ENCODE measurements at regions of chr16 and their contacts with region 1.

Region 1: DNA sequence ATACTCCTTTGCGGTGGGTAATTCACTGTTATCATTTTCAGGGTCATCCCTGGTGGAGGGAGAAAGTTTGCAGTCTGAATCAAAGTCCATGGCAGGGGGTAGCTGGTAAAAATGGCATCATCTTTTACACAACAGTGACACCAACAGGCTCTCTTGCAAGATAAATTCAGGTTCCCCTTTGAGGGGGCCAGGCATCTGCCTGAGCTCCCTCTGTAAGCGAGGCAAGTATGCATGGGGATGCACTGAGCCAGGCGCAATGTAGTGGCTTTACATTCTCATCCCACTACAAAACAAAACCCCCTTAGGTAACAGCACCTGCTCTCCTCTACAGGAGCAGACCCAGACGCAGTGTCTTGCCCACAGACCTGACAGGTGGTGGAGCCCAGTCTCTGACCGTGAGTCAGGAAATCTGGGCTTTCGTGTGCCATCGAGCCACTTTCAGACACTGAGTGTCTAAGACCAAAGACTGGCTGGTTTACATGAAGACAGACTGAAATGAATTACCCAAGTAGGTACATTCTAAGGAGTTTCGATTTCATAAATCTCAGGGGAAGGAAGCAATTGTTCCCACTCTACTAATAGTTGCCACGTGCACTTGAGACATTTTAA is 17.7 kb downstream of the LITAFD start:
- DNase-seq: no peak
- H3K4me3 Mint-ChIP-seq: no peak overlapping the region
- H3K27ac Mint-ChIP-seq: no peak overlapping the region
- H3K4me1 Mint-ChIP-seq: no peaks in the 10 kb centered on the region
- H3K27me3 Mint-ChIP-seq: no peaks in the 10 kb centered on the region

Region 2: DNA sequence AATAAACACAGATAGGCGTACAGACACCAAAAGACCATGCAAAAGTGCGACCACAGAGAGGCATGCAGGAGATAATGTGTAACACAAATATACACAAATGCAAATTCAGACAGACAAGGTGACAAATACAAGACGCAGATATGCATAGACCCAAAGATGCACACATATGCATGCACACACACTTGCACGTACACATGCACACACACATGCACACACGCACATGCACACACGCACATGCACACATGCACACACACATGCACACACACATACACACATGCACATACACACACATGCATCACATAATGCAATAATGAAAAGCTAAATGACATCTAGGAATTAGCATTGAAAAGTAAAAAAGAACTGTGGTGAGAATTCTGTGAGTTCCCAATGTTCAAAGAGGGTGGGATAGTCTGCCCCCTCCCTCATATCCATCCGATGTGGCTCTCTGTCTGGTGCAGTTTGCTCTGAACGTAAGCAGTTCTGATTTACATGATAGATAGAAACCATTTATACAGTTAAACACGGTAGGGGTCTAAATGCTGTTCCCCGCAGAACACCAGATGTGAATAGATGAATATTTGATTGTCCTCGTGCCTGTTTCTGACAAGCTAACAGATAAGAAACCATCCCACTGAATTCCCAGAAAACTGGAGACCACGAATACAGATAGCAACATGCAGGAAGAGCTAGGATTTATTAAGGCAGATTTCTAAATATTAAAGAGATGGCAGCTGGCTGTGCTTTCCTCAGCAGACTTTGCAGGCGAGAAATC is 495.6 kb before region 1 on chr16:
- intact Hi-C with region 1: no loop called
- DNase-seq: no peak
- H3K4me3 Mint-ChIP-seq: no peak overlapping the region
- H3K27ac Mint-ChIP-seq: no peak overlapping the region
- H3K4me1 Mint-ChIP-seq: no peaks in the 10 kb centered on the region
- H3K27me3 Mint-ChIP-seq: no peaks in the 10 kb centered on the region

Region 3: DNA sequence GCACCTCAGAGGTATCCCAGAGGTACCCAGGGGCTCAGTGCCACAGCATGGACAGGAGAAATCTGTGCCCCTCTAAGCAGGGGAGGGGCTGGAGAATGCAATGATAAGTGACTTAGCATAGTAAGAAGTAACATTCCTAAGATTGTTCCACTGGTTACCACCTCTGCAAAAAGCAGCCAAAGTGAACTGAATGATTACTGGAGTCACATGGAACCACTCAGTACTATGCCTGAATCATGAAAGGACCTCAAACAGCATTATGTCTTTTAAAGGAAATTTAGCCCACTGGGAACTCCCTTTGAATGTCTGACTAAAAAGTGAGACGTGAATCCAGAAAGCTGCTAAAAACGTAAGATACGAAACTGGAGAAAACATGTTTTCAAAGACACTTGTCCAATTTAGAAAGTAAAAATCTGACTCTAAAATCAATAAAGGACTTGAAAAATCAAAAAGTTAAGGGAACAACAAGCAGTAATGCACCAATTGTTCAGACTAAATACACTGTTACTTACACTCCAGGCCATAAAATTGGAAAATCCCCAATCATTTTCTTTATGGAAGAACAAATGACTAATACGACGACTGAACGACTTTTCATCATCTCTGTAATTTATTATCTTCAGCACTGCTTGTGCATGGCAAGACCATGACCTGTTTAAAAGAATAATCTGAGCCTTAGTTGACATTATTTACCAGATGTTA is 21.0 kb after region 1 on chr16:
- intact Hi-C with region 1: loop called (anchors 2 kb)
- DNase-seq: no peak
- H3K4me3 Mint-ChIP-seq: peak overlapping the region; percentile 7
- H3K27ac Mint-ChIP-seq: peak overlapping the region; percentile 73
- H3K4me1 Mint-ChIP-seq: peaks cover 60% of the 10 kb centered on the region
- H3K27me3 Mint-ChIP-seq: no peaks in the 10 kb centered on the region

Measured in activated T-helper 1 cell treated with anti-CD3 and anti-CD28 coated beads, Interleukin-12 subunit alpha, Interleukin-12 subunit beta, Interleukin-2, Interleukin-4 antibody, amounts not matched to agents 30 ng/mL and 10 ng/mL and 1 ng/mL, durations not matched to agents 14 hours and 24 hours and 36 hours (primary cell).